PC-3 (cell line): ENCODE measurements at regions of chr1 and their contacts with region 1.

Region 1: DNA sequence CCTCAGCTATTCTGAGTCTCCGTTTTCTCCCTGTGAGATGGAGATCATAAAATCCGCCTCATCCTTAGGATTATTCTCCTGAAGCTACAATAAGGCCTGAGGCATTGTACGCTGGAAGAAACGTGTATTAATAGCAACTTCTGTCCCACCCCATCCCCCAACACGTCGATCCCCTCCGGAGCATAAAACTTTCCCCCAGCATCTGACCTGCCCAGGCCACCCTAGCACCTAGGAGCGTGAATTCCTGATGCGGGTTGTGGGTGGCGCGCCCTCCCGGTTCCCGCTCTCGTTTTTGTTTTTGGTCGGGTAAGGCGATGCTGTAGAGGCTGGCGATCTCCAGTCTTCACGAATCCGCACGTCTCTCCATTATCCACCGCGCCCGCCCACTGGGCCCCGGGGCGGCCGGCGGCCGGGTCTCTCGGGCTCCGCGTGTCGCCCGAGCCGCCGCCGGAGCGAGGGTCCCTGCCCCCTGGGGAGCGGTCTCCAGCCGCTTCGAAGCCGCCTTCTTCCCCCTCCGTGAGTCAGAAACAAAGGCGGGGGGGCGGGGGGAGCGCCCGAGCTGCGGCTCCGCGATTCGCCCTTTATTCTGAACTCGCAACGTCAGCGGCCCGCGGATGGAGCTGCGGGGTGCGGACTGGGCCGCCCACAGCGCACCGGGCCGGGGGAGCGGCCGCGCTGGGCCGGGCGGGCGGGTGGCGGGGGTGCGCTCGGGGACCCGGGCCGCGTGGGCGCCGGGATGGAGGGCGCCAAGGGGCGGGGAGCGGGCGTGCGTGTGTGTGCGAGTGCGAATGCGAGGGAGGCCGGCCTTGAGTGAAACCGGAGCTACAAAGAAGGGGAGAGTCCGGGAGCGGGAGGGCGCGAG is at the start of gene PLEKHO1:
- DNase-seq: peak; percentile 82
- ATAC-seq: peak; percentile 84
- H3K4me3 ChIP-seq: peak within 1 kb of the TSS; percentile 69
- H3K27ac ChIP-seq: no peak within 1 kb of the TSS
- H3K4me1 ChIP-seq: peaks cover 9% of the 10 kb centered on the region; the same call in 1 of the 2 replicates
- H3K27me3 ChIP-seq: no peaks in the 10 kb centered on the region
- CTCF ChIP-seq: no peak
- total RNA-seq, gene PLEKHO1: 13.8 and 29.5 TPM in 2 replicates

Region 2: DNA sequence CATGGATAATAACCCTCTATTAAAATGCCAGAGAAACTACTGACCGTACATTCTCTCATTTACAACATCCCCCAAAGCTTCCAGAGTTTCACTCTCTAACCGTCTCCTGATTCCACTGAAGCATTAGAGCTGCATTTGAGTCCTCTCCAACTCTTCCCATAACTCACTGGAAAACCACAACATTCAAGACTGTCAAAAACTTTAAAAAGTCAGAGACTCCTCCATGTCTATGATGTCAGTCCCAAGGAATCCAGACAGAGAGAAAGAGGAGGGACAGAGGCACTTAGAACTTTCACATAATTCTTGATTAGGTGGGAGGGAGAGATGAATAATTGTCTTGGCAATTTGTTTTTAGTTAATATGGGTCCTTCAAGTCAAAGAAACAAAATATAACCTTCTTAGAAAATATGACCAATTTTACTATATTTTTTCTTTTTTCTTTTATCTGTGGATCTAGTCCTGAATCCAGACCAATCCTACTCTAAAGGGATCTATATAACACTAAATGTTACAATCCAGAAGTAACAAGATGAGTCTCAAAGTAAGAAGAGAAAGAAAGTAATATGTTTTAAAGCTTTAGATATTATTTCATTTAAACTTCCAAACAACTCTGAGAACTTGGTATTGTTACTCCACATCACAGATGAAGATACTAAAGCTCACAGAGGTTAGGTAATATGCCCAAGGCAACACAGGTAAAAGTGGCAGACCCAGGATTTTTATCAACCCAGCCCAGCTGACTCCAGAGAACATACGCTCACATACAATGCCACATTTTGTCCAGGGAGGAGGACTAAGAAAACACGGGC is 162.8 kb before region 1 on chr1:
- CTCF ChIA-PET with region 1: no interaction called
- POLR2A ChIA-PET with region 1: interaction called, 15 read pairs
- intact Hi-C with region 1: no loop called
- DNase-seq: peak; percentile 31
- ATAC-seq: peak; percentile 33; the same call in 1 of the 2 replicates
- H3K4me3 ChIP-seq: no peak overlapping the region
- H3K27ac ChIP-seq: no peak overlapping the region
- H3K4me1 ChIP-seq: peaks cover 11% of the 10 kb centered on the region
- H3K27me3 ChIP-seq: no peaks in the 10 kb centered on the region
- CTCF ChIP-seq: no peak

Region 3: GRCh38 chr1:150083907-150084306 is 65.6 kb before region 1 on chr1:
- CTCF ChIA-PET with region 1: no interaction called
- POLR2A ChIA-PET with region 1: interaction called, 13 read pairs
- intact Hi-C with region 1: no loop called
- DNase-seq: no peak
- ATAC-seq: no peak
- H3K4me3 ChIP-seq: no peak overlapping the region
- H3K27ac ChIP-seq: no peak overlapping the region
- H3K4me1 ChIP-seq: no peaks in the 10 kb centered on the region
- H3K27me3 ChIP-seq: no peaks in the 10 kb centered on the region
- CTCF ChIP-seq: no peak